ENCODE measurements at regions of chr5 and their contacts with region 1.

Region 1: GRCh38 chr5:134845852-134846640 is at the start of gene C5orf24:
- DNase-seq: peak; percentile 88 to 96
- ATAC-seq: peak; percentile 94
- H3K4me3 ChIP-seq: peak within 1 kb of the TSS; percentile 84
- H3K27ac ChIP-seq: peak within 1 kb of the TSS; percentile 94 to 98
- H3K4me1 ChIP-seq: peaks cover 69% of the 10 kb centered on the region
- CTCF ChIP-seq: no peak
- EP300 ChIP-seq: no peak
- POLR2A ChIP-seq: peak; percentile 98
- RAD21 ChIP-seq: no peak
- polyA plus RNA-seq, gene C5orf24: 44.6 and 53.7 TPM in 2 replicates

Region 2: DNA sequence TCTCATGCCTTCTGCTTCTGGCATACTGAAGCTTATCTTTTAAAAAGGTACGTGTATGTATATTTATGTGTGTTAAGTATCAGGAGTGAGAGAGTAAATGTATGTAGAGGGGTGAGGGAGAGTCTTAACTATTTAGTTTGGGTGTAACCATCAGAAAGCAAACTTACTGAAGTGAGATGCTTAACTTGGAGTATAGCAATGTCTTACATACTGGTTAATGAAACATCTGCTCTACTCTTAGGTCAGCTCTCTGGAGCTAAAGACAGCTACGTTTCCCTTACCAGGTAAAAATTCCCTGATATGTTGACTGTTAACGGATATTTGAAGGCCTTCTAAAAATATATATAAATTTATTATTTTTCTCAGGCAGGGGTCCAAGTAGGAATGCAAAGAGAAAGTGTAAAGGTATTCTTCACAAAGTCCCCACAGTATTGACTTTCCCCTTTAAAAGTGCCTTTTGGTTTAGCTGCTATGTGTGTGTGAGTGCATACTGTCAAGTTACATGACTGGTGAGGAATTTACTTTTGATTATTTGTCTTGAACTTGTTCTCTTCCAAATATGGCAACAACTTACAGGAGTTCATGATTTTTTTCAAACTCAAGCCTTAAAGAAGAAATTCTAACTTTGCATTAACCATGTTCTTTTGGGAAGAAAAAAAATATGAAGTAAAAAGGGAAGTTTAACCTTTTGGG is 12.6 kb before region 1 on chr5:
- CTCF ChIA-PET with region 1: interaction called, 5 read pairs
- POLR2A ChIA-PET with region 1: interaction called, 15 read pairs
- DNase-seq: no peak
- ATAC-seq: peak in 1 of 2 experiments; percentile 30; a peak in 2 of 6 replicates
- H3K4me3 ChIP-seq: no peak overlapping the region
- H3K27ac ChIP-seq: no peak overlapping the region
- H3K4me1 ChIP-seq: peaks cover 15% of the 10 kb centered on the region
- CTCF ChIP-seq: no peak
- EP300 ChIP-seq: no peak
- POLR2A ChIP-seq: no peak
- RAD21 ChIP-seq: no peak

Region 3: DNA sequence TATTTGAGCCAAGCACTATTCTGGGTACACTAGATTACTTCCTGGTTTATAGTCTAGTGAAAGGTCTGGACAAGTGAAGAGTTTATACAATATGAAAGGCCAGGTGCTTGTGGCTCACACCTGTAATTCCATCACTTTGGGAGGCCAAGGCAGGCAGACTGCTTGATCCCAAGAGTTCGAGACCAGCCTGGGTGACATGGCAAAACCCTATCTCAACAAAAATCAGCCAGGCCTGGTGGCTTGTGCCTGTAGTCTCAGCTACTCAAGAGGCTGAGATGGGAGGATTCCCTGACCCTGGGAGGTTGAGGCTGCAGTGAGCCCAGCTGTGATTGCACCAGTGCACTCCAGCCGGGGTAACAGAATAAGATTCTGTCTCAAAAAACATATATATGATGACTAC is 18.7 kb after region 1 on chr5:
- CTCF ChIA-PET with region 1: interaction called, 4 read pairs
- POLR2A ChIA-PET with region 1: interaction called, 11 read pairs
- DNase-seq: no peak
- ATAC-seq: peak in 1 of 2 experiments; percentile 23; a peak in 1 of 6 replicates
- H3K4me3 ChIP-seq: no peak overlapping the region
- H3K27ac ChIP-seq: no peak overlapping the region
- H3K4me1 ChIP-seq: no peaks in the 10 kb centered on the region
- CTCF ChIP-seq: no peak
- EP300 ChIP-seq: no peak
- POLR2A ChIP-seq: no peak
- RAD21 ChIP-seq: no peak

Region 4: DNA sequence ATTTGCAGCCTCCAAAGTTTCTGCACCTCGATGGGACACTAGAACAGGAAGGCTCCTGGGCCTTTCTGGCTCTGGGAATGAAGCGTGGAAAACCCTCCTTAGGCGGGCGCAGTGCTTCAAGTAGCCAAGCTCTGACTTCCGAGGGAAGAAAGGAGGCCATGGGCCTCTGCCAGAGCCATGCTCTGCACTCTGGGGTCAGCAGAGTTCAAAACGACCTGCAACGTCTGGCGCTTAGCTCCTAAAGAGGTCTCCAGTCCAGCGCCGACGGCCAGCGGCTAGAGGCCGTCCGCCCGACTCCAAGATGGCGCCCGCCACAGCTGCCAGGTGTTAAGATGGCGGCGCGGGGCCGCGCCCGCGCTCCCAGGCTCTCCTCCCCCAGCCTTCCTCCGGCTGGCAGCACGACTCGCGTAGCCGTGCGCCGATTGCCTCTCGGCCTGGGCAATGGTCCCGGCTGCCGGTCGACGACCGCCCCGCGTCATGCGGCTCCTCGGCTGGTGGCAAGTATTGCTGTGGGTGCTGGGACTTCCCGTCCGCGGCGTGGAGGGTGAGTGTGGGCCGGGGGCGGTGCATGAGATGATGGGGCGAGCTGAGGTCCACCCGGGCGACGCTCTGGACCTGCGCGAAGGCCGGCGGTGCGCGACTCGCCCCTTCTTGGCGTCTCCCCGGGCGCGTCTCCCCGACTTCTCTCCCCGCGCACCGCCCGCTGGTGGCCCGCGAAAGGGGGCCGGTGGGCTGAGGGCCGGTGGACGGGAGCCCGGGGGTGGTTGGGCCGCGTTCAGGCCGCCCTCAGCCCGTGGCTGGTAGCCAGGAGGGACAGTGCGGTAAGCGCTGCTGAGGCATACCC is 28.2 kb after region 1 on chr5 and contains the start of gene TXNDC15:
- CTCF ChIA-PET with region 1: no interaction called
- POLR2A ChIA-PET with region 1: interaction called, 15 read pairs
- DNase-seq: peak; percentile 85 to 89
- ATAC-seq: peak; percentile 91 to 96
- H3K4me3 ChIP-seq: peak within 1 kb of the TSS; percentile 78
- H3K27ac ChIP-seq: peak within 1 kb of the TSS; percentile 95 to 96
- H3K4me1 ChIP-seq: peaks cover 10% of the 10 kb centered on the region; the same call in 2 of the 3 replicates
- CTCF ChIP-seq: no peak
- EP300 ChIP-seq: no peak
- POLR2A ChIP-seq: peak; percentile 97
- RAD21 ChIP-seq: no peak
- polyA plus RNA-seq, gene TXNDC15: 61.0 and 85.2 TPM in 2 replicates

Measured in A549 (cell line).